ENCODE measurements at regions of chr2 and their contacts with region 1.

Region 1: DNA sequence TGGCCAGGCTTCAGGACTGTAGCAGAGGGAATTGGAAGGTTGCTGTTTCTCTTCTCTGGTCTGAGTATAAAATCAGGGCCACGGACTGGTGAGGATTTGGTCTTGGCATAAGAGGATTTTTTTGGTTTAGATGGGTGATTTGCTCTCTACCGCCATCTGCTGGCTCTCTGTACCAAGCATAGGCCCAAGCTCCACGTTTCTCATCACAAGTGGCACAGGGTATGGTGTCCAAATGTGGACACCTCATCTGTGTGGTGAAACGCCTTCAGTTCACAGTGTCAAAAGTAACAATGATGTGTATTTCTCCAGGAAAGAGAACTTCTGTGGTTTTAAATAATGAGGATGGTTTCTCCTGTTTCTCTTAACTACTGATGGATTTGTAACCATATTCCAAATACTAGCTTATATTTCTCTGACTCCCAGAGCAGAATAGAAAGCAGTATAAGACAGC is 115.1 kb downstream of the EML6 start:
- DNase-seq: peak; percentile 46
- ATAC-seq: peak; percentile 94
- H3K4me3 ChIP-seq: no peak overlapping the region
- H3K27ac ChIP-seq: no peak overlapping the region
- H3K4me1 ChIP-seq: no peaks in the 10 kb centered on the region
- H3K27me3 ChIP-seq: no peaks in the 10 kb centered on the region
- CTCF ChIP-seq: peak; percentile 76 to 95 (median 89)
- POLR2A ChIP-seq: no peak
- RAD21 ChIP-seq: peak; percentile 77

Region 2: GRCh38 chr2:54522624-54523281 is 315.9 kb before region 1 on chr2:
- CTCF ChIA-PET with region 1: interaction called, 6 read pairs
- POLR2A ChIA-PET with region 1: no interaction called
- RAD21 ChIA-PET with region 1: no interaction called
- intact Hi-C with region 1: loop called (anchors 5 kb)
- DNase-seq: peak; percentile 60
- ATAC-seq: peak; percentile 97
- H3K4me3 ChIP-seq: no peak overlapping the region
- H3K27ac ChIP-seq: no peak overlapping the region
- H3K4me1 ChIP-seq: peaks cover 13 to 31% of the 10 kb centered on the region in 2 experiments
- H3K27me3 ChIP-seq: no peaks in the 10 kb centered on the region
- CTCF ChIP-seq: peak; percentile 54 to 69 (median 63)
- POLR2A ChIP-seq: no peak
- RAD21 ChIP-seq: peak; percentile 87

Region 3: DNA sequence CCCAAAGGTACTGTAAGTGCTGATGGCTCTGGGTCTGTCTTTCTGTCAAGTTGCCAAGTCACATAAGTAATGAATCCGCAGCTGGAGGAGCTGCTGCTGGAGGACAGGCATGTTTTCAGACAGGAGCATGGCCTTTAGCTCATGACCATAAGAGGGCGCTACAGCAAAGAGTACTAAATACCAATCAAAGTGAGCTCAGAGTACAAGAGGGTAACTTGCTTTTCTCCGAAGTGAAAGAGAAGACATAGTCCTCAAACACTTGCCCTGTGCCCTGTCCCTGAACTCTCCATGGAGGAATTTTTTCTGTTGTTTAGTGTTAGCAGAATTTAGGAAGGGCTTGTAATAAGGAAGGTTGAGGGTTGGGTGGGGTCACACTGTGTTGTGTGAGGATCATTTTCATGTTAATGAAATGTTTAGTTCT is 173.2 kb before region 1 on chr2:
- CTCF ChIA-PET with region 1: interaction called, 29 read pairs
- POLR2A ChIA-PET with region 1: no interaction called
- RAD21 ChIA-PET with region 1: interaction called, 4 to 5 read pairs
- intact Hi-C with region 1: loop called (anchors 5 kb)
- DNase-seq: peak; percentile 32
- ATAC-seq: peak; percentile 83
- H3K4me3 ChIP-seq: no peak overlapping the region
- H3K27ac ChIP-seq: no peak overlapping the region
- H3K4me1 ChIP-seq: peaks cover 0 to 8% of the 10 kb centered on the region in 2 experiments; a peak in 1 of 4 replicates
- H3K27me3 ChIP-seq: no peaks in the 10 kb centered on the region
- CTCF ChIP-seq: peak; percentile 33 to 85 (median 78); a peak in 5 of 6 replicates
- POLR2A ChIP-seq: no peak
- RAD21 ChIP-seq: peak; percentile 63

Region 4: GRCh38 chr2:54704688-54705605 is 133.7 kb before region 1 on chr2:
- CTCF ChIA-PET with region 1: interaction called, 16 read pairs
- POLR2A ChIA-PET with region 1: no interaction called
- RAD21 ChIA-PET with region 1: no interaction called
- intact Hi-C with region 1: no loop called
- DNase-seq: peak; percentile 42
- ATAC-seq: peak; percentile 82
- H3K4me3 ChIP-seq: no peak overlapping the region
- H3K27ac ChIP-seq: no peak overlapping the region
- H3K4me1 ChIP-seq: no peaks in the 10 kb centered on the region
- H3K27me3 ChIP-seq: no peaks in the 10 kb centered on the region
- CTCF ChIP-seq: peak; percentile 33 to 78 (median 69); a peak in 5 of 6 replicates
- POLR2A ChIP-seq: no peak
- RAD21 ChIP-seq: peak; percentile 84

Region 5: GRCh38 chr2:54723131-54723995 is 115.2 kb before region 1 on chr2 and contains the start of gene EML6:
- CTCF ChIA-PET with region 1: interaction called, 4 read pairs
- POLR2A ChIA-PET with region 1: no interaction called
- RAD21 ChIA-PET with region 1: no interaction called
- intact Hi-C with region 1: loop called (anchors 10 kb)
- DNase-seq: peak; percentile 96
- ATAC-seq: peak; percentile 97
- H3K4me3 ChIP-seq: peak within 1 kb of the TSS; percentile 78 to 80
- H3K27ac ChIP-seq: peak within 1 kb of the TSS; percentile 61
- H3K4me1 ChIP-seq: peaks cover 3 to 20% of the 10 kb centered on the region in 2 experiments; a peak in 3 of 4 replicates
- H3K27me3 ChIP-seq: no peaks in the 10 kb centered on the region
- CTCF ChIP-seq: peak in 2 of 3 experiments; percentile 14 to 22; a peak in 1 of 6 replicates
- POLR2A ChIP-seq: peak; percentile 46
- RAD21 ChIP-seq: no peak
- total RNA-seq, gene EML6: 6.6 TPM

Region 6: DNA sequence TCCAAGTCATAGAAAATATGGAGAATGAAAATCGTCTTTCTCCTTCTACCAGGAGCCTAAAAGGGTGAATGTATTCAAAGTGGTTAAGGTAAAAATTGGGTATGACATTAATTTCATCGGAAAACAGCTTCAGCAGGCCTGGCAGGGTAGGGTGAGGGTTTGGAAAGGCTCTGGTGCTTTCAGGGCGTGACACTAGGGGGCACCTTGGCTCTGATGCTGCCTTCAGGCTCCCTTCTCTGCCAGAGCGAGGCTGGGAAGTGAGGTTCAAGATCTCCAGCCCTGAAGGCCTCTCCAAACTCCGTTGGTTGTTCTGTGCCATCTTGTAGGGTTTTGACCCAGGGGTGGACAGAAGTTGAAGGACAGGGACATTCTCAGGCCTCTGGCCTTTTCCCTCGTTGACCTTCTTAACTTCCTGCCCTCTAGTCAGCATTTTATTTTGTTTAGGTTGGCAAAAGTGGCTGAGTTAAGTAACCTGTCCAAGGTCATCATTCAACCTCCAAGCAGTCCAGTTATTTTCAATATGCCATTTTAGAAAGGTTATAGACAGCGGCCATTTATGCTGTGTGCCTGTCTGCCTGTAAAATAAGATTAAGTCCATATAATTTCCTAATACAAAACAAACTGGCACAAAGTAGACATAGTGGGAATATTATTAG is 74.8 kb before region 1 on chr2:
- CTCF ChIA-PET with region 1: interaction called, 13 read pairs
- POLR2A ChIA-PET with region 1: no interaction called
- RAD21 ChIA-PET with region 1: interaction called in 1 of 2 experiments, 3 read pairs
- intact Hi-C with region 1: loop called (anchors 1 kb)
- DNase-seq: no peak
- ATAC-seq: peak; percentile 79
- H3K4me3 ChIP-seq: no peak overlapping the region
- H3K27ac ChIP-seq: no peak overlapping the region
- H3K4me1 ChIP-seq: peaks cover 0 to 9% of the 10 kb centered on the region in 2 experiments; a peak in 2 of 4 replicates
- H3K27me3 ChIP-seq: no peaks in the 10 kb centered on the region
- CTCF ChIP-seq: peak; percentile 34 to 63 (median 57); a peak in 5 of 6 replicates
- POLR2A ChIP-seq: no peak
- RAD21 ChIP-seq: peak; percentile 62

Region 7: DNA sequence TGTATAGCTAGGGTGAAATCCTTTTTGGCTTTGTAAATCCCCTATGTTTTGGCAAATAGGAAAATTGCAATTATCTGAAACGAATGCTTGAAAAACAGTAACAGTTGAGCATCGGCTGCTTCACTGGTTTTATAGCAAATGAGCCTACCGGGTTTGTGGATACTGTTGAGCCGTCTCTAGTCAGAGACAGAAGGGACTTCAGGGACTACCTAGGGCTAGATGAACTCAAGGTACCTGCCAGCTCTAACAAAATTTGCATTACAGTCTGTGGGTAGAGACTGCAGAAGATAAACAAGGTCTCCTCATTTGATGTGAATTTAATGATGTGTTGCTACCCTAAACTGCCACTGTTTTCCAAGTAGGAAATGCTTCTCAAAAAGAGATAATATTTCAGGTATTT is 14.0 kb before region 1 on chr2:
- CTCF ChIA-PET with region 1: interaction called, 34 read pairs
- POLR2A ChIA-PET with region 1: no interaction called
- RAD21 ChIA-PET with region 1: no interaction called
- intact Hi-C with region 1: no loop called
- DNase-seq: no peak
- ATAC-seq: no peak
- H3K4me3 ChIP-seq: no peak overlapping the region
- H3K27ac ChIP-seq: no peak overlapping the region
- H3K4me1 ChIP-seq: no peaks in the 10 kb centered on the region
- H3K27me3 ChIP-seq: no peaks in the 10 kb centered on the region
- CTCF ChIP-seq: no peak
- POLR2A ChIP-seq: no peak
- RAD21 ChIP-seq: no peak

Region 8: DNA sequence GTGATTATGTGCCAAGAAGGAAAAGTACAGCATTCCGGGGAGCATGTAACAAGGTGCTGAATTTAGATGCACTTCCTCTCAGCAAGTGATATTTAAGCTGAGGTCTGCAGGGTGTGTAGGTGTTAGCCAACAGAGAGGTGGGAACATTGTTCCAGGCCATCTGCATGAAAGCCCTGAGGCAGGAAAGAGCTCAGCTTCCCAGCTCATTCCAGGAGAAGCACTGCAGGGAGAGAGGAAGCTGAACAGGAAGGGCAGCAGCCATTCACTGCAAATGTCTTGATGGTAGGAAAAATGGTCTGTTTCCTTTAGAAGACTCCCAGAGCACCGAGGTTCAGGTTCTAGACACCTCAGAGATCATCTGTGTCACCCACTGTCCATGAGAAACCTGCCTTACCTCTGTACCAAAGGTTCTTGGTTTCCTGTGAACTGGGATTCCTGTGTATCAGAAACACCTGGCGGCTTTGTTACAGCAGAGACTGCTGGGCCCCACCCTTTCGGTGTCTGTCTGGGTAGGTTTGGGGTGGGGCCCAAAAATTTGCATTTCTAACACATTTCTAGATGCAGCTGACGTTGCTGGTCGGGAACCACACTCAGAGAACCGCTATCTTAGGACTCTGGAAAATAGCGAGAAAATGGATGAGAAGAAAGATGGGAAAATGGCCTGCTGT is 127.7 kb after region 1 on chr2:
- CTCF ChIA-PET with region 1: no interaction called
- POLR2A ChIA-PET with region 1: no interaction called
- RAD21 ChIA-PET with region 1: no interaction called
- intact Hi-C with region 1: no loop called
- DNase-seq: no peak
- ATAC-seq: no peak
- H3K4me3 ChIP-seq: no peak overlapping the region
- H3K27ac ChIP-seq: no peak overlapping the region
- H3K4me1 ChIP-seq: peaks cover 0 to 5% of the 10 kb centered on the region in 2 experiments; a peak in 1 of 4 replicates
- H3K27me3 ChIP-seq: no peaks in the 10 kb centered on the region
- CTCF ChIP-seq: no peak
- POLR2A ChIP-seq: no peak
- RAD21 ChIP-seq: no peak

Region 9: DNA sequence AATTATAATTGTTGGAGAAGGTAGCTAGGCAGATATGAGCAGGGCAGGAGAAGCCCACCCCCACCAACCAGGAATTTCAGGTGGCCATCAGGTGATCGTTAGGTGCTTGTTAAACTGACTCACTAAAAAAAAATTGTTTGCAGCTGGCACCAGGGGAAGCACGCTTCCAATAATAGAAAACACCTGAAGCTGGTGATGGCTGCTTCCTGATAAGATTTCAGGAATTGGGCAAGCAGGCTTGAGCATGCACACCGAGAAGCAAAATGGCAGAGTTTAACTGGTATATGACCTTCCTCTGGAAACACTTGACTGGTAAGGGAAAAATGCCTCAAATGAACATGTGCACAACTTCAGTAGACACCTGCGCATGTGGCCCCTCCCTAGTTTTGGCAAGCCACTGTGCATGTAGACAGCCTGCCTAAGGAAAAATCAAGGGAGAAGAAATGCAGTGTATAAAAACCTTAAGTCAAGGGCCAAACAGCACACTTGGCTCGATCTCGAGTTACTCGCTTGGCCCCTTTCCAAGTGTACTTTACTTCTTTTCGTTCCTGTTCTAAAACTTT is 1638.0 kb after region 1 on chr2:
- CTCF ChIA-PET with region 1: no interaction called
- POLR2A ChIA-PET with region 1: no interaction called
- RAD21 ChIA-PET with region 1: no interaction called
- intact Hi-C with region 1: no loop called
- DNase-seq: no peak
- ATAC-seq: no peak
- H3K4me3 ChIP-seq: no peak overlapping the region
- H3K27ac ChIP-seq: no peak overlapping the region
- H3K4me1 ChIP-seq: no peaks in the 10 kb centered on the region
- H3K27me3 ChIP-seq: no peaks in the 10 kb centered on the region
- CTCF ChIP-seq: no peak
- POLR2A ChIP-seq: no peak
- RAD21 ChIP-seq: no peak

Measured in HCT116 (cell line).